ENCODE measurements at regions of chr1 and their contacts with region 1.

Region 1: GRCh38 chr1:173429471-173430402 is 47.4 kb upstream of the PRDX6 start:
- DNase-seq: peak; percentile 75
- H3K4me3 ChIP-seq: peak overlapping the region; percentile 30
- H3K27ac ChIP-seq: peak overlapping the region; percentile 66
- H3K4me1 ChIP-seq: peaks cover 29% of the 10 kb centered on the region
- CTCF ChIP-seq: peak; percentile 96

Region 2: DNA sequence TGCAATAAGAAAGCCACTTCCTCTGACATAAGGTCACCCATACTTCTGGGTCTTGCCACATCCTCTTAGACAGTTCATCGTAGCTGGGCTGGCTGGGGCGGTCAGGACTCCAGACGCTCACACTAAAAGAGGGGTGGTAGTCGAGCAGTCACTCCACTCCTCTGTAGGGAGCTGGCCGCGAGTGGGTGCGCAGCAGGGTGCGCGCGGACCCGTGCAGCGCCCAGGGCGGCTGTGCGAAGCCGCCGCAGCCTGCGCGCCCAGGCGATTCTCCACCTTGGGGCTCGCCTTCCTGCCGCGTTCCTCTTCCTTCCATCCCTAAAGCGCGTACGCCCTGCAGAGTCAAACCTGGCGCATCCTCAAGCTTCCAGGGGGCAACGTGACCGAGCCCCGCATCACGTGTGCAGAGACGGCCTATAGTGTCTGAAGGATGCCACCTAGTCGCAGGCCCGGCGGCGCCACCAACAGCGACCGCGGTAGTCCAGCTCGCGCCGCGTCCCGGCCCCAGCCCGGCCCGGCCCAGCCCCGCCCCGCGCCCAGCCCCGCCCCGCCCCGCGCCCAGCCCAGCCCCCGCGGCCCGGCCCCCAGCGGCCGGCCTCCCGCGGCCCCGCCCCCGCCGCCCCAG is 47.0 kb after region 1 on chr1:
- CTCF ChIA-PET with region 1: no interaction called
- POLR2A ChIA-PET with region 1: no interaction called
- intact Hi-C with region 1: loop called (anchors 2 kb)
- DNase-seq: peak; percentile 95
- H3K4me3 ChIP-seq: peak overlapping the region; percentile 99
- H3K27ac ChIP-seq: peak overlapping the region; percentile 63
- H3K4me1 ChIP-seq: peaks cover 30% of the 10 kb centered on the region
- CTCF ChIP-seq: no peak

Region 3: GRCh38 chr1:173714759-173715537 is 285.2 kb after region 1 on chr1 and contains the start of gene KLHL20:
- CTCF ChIA-PET with region 1: no interaction called
- POLR2A ChIA-PET with region 1: no interaction called
- intact Hi-C with region 1: loop called (anchors 5 kb)
- DNase-seq: peak; percentile 94
- H3K4me3 ChIP-seq: peak within 1 kb of the TSS; percentile 78
- H3K27ac ChIP-seq: peak within 1 kb of the TSS; percentile 77
- H3K4me1 ChIP-seq: peaks cover 23% of the 10 kb centered on the region
- CTCF ChIP-seq: 0 out of 2 replicates have a peak, but pooled peaks have one; percentile 38
- total RNA-seq, gene KLHL20: 17.5 and 28.2 TPM in 2 replicates

Region 4: DNA sequence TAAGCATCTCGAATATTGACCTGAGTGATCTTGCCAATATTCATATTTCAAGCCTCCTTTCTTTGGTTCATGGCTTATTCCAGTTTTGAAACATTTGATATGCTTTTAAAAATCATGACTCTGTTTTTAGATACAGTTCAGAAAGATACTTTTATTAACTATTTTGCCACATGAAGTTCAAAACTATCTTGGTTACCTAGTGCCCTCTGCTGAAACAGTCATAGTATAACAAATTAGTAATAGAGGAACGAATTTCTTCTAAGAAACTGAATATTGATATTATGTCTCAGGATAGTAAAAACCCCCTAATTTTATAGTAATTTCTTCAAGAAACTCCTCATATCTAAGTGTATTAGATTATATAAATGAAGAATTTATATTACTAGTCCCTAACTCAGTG is 645.0 kb after region 1 on chr1:
- CTCF ChIA-PET with region 1: no interaction called
- POLR2A ChIA-PET with region 1: no interaction called
- intact Hi-C with region 1: loop called (anchors 5 kb)
- DNase-seq: peak; percentile 36
- H3K4me3 ChIP-seq: no peak overlapping the region
- H3K27ac ChIP-seq: no peak overlapping the region
- H3K4me1 ChIP-seq: no peaks in the 10 kb centered on the region
- CTCF ChIP-seq: peak; percentile 85